ENCODE measurements at regions of chr22 and their contacts with region 1.

Region 1: DNA sequence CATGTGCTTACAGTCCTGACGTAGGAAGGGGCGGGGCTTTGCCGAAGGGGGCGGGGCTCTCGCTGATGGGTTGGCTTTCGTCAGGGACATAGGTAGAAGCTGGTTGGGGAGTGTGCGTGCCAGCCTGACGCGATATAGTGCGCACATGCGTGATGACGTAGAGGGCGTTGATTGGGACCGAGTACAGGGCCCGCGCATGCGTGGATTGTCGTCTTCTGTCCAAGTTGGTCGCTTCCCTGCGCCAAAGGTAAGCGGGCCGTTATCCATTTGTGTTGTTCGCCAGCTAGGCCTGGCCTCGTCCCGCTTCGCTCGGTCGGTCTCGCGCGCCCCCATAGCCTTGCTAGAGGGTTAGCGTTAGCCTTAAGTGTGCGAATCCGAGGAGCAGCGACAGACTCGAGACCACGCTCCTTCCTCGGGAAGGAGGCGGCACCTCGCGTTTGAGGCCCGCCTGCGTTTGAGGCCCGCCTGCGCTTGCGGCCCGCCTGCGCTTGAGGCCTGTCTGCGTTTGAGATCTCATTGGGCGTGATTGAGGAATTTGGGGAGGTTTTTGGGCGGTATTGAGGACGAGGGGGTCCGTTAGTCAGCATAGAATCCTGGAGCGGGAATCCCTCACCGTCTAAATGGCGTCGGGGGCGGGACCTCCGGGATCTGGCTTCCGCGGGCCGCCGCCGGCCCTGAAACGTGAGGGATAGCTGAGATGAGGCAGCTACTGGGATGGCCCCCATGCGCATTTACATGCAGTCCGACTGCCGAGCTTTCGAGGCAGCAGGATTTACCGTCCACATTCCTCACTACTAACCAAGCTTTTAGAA is at the start of gene XRCC6:
- DNase-seq: peak; percentile 100
- ATAC-seq: peak; percentile 91
- H3K4me3 Mint-ChIP-seq: peak within 1 kb of the TSS; percentile 98
- H3K27ac Mint-ChIP-seq: peak within 1 kb of the TSS; percentile 99
- H3K4me1 Mint-ChIP-seq: peaks cover 48% of the 10 kb centered on the region
- H3K27me3 Mint-ChIP-seq: no peaks in the 10 kb centered on the region
- total RNA-seq, gene XRCC6: 427 to 469 TPM

Region 2: GRCh38 chr22:41285820-41286638 is 335.3 kb before region 1 on chr22 and contains the start of gene RANGAP1:
- CTCF ChIA-PET with region 1: no interaction called
- POLR2A ChIA-PET with region 1: interaction called, 3 read pairs
- intact Hi-C with region 1: loop called in 1 of 2 experiments (anchors 1 kb)
- DNase-seq: peak; percentile 99
- ATAC-seq: peak; percentile 94
- H3K4me3 Mint-ChIP-seq: peak within 1 kb of the TSS; percentile 88
- H3K27ac Mint-ChIP-seq: peak within 1 kb of the TSS; percentile 97
- H3K4me1 Mint-ChIP-seq: peaks cover 33% of the 10 kb centered on the region
- H3K27me3 Mint-ChIP-seq: no peaks in the 10 kb centered on the region
- total RNA-seq, gene RANGAP1: 140 to 157 TPM

Region 3: DNA sequence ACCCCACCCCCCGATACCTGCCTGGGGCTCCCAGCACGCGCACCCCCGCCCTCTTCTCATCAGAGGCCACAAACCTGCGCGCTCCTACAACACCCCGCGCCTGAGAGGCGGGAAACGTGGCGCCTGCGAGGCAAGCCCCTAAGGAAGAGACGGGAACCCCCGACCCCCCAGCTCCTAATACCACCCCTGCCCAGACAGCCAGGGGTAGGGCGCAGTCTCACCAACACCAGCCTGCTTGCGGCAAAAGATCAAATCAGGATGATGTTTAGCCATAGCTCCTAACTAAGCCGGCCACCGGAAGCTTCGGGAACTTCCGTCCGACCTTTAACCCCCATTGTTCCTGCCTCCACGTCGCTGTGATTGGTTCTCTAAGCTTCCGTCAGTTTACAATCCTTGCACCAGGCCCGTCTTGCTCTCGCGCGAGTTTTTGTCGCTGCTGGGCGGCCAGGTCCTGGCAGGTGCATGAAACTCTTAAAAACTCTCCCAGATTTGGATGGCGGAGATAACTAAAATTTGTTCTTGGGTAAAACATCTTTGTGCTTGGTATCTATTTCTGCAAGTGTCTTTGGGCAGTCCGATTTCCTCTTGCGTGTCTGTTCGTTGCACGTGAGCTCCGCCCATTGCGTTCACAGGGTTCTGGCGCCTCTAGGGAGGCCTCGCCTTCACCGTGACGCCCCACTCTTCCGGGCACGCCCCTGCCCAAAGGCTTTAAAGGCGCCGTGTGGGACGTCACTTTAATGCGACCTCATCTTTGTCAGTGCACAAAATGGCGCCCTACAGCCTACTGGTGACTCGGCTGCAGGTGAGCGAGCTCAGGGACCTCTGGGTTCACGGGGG is 152.7 kb before region 1 on chr22 and contains the starts of genes ACO2 and PHF5A:
- CTCF ChIA-PET with region 1: interaction called, 3 read pairs
- POLR2A ChIA-PET with region 1: interaction called, 13 read pairs
- intact Hi-C with region 1: loop called (anchors 1 to 2 kb)
- DNase-seq: peak; percentile 98
- ATAC-seq: peak; percentile 94
- H3K4me3 Mint-ChIP-seq: peak within 1 kb of the TSS; percentile 90
- H3K27ac Mint-ChIP-seq: peak within 1 kb of the TSS; percentile 99
- H3K4me1 Mint-ChIP-seq: peaks cover 47% of the 10 kb centered on the region
- H3K27me3 Mint-ChIP-seq: no peaks in the 10 kb centered on the region
- total RNA-seq, gene ACO2: 95.4 to 106 TPM
- total RNA-seq, gene PHF5A: 54.5 to 61.1 TPM

Region 4: GRCh38 chr22:41603873-41604332 is 17.4 kb before region 1 on chr22:
- CTCF ChIA-PET with region 1: interaction called, 5 read pairs
- POLR2A ChIA-PET with region 1: interaction called, 10 read pairs
- intact Hi-C with region 1: loop called (anchors 1 to 2 kb)
- DNase-seq: peak; percentile 81
- ATAC-seq: peak; percentile 99
- H3K4me3 Mint-ChIP-seq: no peak overlapping the region
- H3K27ac Mint-ChIP-seq: no peak overlapping the region
- H3K4me1 Mint-ChIP-seq: peaks cover 27% of the 10 kb centered on the region
- H3K27me3 Mint-ChIP-seq: no peaks in the 10 kb centered on the region

Region 5: GRCh38 chr22:41832553-41833368 is 211.5 kb after region 1 on chr22 and contains the start of gene SREBF2:
- CTCF ChIA-PET with region 1: no interaction called
- POLR2A ChIA-PET with region 1: no interaction called
- intact Hi-C with region 1: loop called in 1 of 2 experiments (anchors 1 kb)
- DNase-seq: peak; percentile 100
- ATAC-seq: peak; percentile 94
- H3K4me3 Mint-ChIP-seq: peak within 1 kb of the TSS; percentile 96
- H3K27ac Mint-ChIP-seq: peak within 1 kb of the TSS; percentile 99
- H3K4me1 Mint-ChIP-seq: peaks cover 45% of the 10 kb centered on the region
- H3K27me3 Mint-ChIP-seq: no peaks in the 10 kb centered on the region
- total RNA-seq, gene SREBF2: 101 to 105 TPM

Measured in activated CD4-positive, alpha-beta T cell treated with anti-CD3 and anti-CD28 coated beads for 36 hours (primary cell).